ENCODE measurements at regions of chr21 and their contacts with region 1.

Region 1: DNA sequence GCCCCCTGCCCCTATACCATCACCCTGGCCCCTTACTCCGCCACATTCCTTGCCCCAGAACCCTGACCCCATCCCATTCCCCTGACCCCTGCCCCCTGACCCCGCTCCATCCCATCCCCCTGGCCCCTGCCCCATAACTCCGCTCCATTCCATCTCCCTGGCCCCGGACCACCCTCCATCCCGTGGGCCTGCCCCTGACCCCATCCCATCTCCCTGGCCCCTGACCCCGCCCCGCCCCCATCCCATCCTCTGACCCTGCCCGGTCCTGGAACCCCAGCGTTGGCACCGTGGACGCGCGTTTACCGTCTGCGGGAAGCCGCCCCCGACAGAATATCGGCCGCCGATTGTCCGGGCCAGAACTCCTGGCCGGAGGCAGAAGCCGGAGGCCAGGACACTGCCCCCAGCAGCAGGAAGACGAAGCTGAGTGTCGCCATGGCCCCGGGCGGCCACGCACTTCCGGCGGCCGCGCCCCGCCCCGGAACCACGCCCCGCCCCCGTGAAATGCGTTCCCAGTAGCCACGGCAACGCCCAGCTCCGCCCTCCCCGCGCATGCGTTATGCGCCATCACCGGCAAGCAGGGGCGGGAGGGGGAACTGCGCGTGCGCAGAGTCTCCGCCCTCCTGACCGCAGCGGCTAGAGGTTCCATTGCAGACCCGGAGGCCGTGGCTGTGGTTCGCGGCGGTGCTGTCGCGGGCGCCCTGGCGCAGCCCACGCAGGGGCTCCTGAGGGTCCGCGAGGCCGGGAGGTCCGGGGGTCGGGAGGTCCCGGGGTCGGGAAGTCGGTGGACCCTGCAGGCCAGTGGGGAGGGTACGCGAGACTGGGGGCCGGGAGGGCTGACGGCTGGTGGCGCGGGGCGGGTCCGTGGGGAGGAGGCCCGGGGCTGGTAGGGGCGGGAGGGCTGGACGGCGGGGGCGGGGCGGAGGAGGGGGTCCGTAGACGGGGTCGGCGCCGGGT is at the start of gene POFUT2:
- DNase-seq: peak; percentile 92
- ATAC-seq: peak; percentile 75
- H3K4me3 ChIP-seq: peak within 1 kb of the TSS; percentile 93
- H3K27ac ChIP-seq: peak within 1 kb of the TSS; percentile 97
- H3K4me1 ChIP-seq: peaks cover 11% of the 10 kb centered on the region
- H3K27me3 ChIP-seq: no peaks in the 10 kb centered on the region
- CTCF ChIP-seq: 0 out of 2 replicates have a peak, but pooled peaks have one; percentile 15
- POLR2A ChIP-seq: peak; percentile 96
- RAD21 ChIP-seq: no peak
- total RNA-seq, gene POFUT2: 18.8 and 23.9 TPM in 2 replicates

Region 2: DNA sequence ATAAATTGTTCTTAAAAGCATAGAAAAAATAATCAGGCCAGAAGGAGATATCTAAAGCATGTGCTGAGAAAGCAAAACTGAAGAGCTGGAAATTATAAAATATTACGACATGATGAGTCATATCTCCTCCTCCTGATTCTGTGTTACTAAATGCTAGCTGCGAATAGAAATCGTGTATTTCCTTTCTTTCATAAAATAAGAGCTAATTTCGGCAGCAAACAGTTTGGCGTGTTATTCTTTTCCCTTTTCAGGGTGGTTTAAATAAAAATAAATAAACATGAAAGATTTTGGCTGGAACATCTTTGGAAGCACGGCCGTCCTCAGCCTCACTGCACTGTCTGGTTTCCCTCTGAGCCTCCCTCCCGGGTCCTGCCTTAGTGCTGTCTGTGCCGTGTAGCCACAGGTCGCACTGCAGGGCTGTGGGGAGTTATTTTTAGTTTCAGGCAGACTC is 157.4 kb before region 1 on chr21:
- CTCF ChIA-PET with region 1: interaction called, 3 read pairs
- POLR2A ChIA-PET with region 1: interaction called, 18 read pairs
- dilution Hi-C with region 1: no loop called
- in situ Hi-C with region 1: no loop called
- intact Hi-C with region 1: no loop called
- DNase-seq: peak; percentile 84
- ATAC-seq: peak; percentile 82
- H3K4me3 ChIP-seq: peak overlapping the region; percentile 31
- H3K27ac ChIP-seq: peak overlapping the region; percentile 56
- H3K4me1 ChIP-seq: peaks cover 24% of the 10 kb centered on the region
- H3K27me3 ChIP-seq: no peaks in the 10 kb centered on the region
- CTCF ChIP-seq: no peak
- POLR2A ChIP-seq: no peak
- RAD21 ChIP-seq: no peak

Region 3: GRCh38 chr21:45277101-45278045 is 10.3 kb before region 1 on chr21:
- CTCF ChIA-PET with region 1: no interaction called
- POLR2A ChIA-PET with region 1: no interaction called
- dilution Hi-C with region 1: no loop called
- in situ Hi-C with region 1: no loop called
- intact Hi-C with region 1: no loop called
- DNase-seq: no peak
- ATAC-seq: no peak
- H3K4me3 ChIP-seq: no peak overlapping the region
- H3K27ac ChIP-seq: no peak overlapping the region
- H3K4me1 ChIP-seq: no peaks in the 10 kb centered on the region
- H3K27me3 ChIP-seq: no peaks in the 10 kb centered on the region
- CTCF ChIP-seq: no peak
- POLR2A ChIP-seq: no peak
- RAD21 ChIP-seq: no peak

Region 4: DNA sequence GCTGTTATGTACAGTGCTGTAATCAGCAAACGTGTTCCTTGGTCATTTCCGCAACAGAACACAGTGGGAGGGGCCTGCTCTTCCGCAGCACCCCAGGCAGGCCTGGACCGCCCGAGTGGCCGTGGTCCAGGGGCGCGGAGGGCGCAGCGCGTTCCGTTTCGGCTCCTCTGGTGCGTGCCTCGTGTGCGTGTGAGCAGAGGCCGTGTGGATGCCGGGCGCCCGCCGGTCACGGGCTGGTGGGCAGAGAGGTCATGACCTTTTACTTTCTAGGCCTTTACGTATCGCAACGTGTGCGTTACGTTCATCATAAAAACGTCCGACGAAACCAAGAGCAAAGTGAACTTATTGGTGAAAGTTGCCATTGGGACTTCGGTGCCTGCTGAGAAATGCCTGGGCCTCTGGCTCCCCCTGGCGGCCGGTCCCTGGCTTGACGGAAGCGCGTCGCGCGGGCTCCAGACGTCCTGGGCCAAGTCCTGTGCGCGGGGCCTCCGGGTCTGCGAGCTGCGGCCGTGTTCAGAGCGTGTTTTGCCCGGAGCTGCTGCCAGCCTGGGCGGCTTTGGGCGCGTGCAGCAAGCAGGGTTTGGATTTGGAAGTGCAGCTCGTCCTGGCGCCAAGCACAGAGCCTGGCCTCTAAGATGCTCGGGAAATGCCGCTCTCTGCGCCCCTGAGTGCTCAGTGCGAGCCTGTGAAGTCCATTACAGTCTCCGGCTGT is 151.6 kb after region 1 on chr21:
- CTCF ChIA-PET with region 1: interaction called, 5 read pairs
- POLR2A ChIA-PET with region 1: no interaction called
- dilution Hi-C with region 1: no loop called
- in situ Hi-C with region 1: no loop called
- intact Hi-C with region 1: loop called (anchors 1 kb)
- DNase-seq: peak; percentile 89
- ATAC-seq: peak; percentile 92
- H3K4me3 ChIP-seq: peak overlapping the region; percentile 10; the same call in 1 of the 2 replicates
- H3K27ac ChIP-seq: peak overlapping the region; percentile 83
- H3K4me1 ChIP-seq: peaks cover 10% of the 10 kb centered on the region
- H3K27me3 ChIP-seq: no peaks in the 10 kb centered on the region
- CTCF ChIP-seq: peak; percentile 98
- POLR2A ChIP-seq: peak; percentile 68
- RAD21 ChIP-seq: peak; percentile 99

Region 5: GRCh38 chr21:45554477-45555175 is 266.9 kb after region 1 on chr21:
- CTCF ChIA-PET with region 1: no interaction called
- POLR2A ChIA-PET with region 1: no interaction called
- dilution Hi-C with region 1: no loop called
- in situ Hi-C with region 1: no loop called
- intact Hi-C with region 1: loop called (anchors 5 kb)
- DNase-seq: peak; percentile 48
- ATAC-seq: peak; percentile 83
- H3K4me3 ChIP-seq: peak overlapping the region; percentile 84
- H3K27ac ChIP-seq: peak overlapping the region; percentile 56
- H3K4me1 ChIP-seq: peaks cover 2% of the 10 kb centered on the region; the same call in 1 of the 2 replicates
- H3K27me3 ChIP-seq: no peaks in the 10 kb centered on the region
- CTCF ChIP-seq: peak; percentile 78
- POLR2A ChIP-seq: peak; percentile 32; the same call in 1 of the 2 replicates
- RAD21 ChIP-seq: peak; percentile 60

Region 6: DNA sequence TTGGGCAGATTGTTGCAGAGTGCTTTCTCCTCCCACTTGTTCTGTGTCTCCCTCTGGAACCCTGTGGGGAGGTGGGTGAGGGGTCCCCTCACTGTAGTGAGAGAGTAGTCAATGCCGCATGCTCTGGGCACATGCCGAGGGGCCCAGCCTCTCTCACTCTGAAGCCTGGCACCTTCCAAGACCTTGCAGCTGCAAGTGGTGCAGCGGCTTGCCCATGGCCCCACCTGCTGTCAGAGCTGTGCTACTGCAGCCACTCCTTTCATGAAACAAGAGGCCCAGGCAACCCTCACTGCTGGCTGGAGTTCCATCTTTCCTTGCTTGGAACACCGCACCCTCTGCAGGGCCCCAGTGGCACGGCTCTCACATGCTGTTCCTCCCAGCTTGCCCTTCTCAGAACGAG is 635.4 kb after region 1 on chr21:
- CTCF ChIA-PET with region 1: no interaction called
- POLR2A ChIA-PET with region 1: no interaction called
- dilution Hi-C with region 1: no loop called
- in situ Hi-C with region 1: no loop called
- intact Hi-C with region 1: loop called (anchors 5 kb)
- DNase-seq: peak; percentile 75
- ATAC-seq: peak; percentile 89
- H3K4me3 ChIP-seq: no peak overlapping the region
- H3K27ac ChIP-seq: no peak overlapping the region
- H3K4me1 ChIP-seq: peaks cover 13% of the 10 kb centered on the region
- H3K27me3 ChIP-seq: no peaks in the 10 kb centered on the region
- CTCF ChIP-seq: peak; percentile 86
- POLR2A ChIP-seq: no peak
- RAD21 ChIP-seq: peak; percentile 94